Colonic mucosa (tissue), 4 donors: ENCODE measurements at regions of chr20 and their contacts with region 1.

Region 1: DNA sequence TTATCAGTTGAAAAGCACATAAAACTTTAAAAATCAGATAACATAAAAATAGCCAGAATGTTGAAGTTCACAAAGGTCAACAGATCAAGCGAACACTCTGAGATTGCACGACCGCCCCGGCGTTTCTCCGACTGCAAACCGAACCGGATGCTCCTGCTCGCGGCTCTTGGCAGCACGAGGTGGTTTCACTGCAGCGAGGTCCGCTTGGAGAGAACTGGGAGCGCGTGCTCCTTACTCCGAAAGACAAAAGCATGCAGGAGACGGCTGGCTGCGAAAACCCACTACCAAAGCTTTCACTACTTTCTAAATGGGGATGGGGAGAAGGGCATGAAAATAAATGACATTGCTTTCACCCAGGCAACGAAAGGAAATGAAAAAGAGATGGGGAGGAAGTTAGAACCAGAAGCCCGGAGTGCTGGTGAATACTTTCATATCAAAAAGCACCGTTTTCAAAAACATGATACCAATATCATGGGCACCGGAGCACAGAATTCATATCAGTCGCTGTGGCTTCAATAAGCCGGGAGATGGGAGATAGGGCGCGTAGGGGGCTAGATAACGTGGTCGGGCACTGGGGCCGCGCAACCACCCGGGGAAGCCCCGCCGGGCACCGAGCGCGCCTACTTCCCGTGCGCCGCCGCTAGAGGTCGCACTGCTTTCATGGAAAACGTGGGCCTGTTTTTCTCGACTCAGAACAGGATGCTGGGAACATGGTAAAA is 8.3 kb upstream of the ANKRD60 start:
- DNase-seq: peak; percentile 86
- H3K4me3 ChIP-seq: peak overlapping the region; percentile 40
- H3K27ac ChIP-seq: no peak overlapping the region
- H3K4me1 ChIP-seq: no peaks in the 10 kb centered on the region
- H3K27me3 ChIP-seq: no peaks in the 10 kb centered on the region
- CTCF ChIP-seq: peak; percentile 94

Region 2: DNA sequence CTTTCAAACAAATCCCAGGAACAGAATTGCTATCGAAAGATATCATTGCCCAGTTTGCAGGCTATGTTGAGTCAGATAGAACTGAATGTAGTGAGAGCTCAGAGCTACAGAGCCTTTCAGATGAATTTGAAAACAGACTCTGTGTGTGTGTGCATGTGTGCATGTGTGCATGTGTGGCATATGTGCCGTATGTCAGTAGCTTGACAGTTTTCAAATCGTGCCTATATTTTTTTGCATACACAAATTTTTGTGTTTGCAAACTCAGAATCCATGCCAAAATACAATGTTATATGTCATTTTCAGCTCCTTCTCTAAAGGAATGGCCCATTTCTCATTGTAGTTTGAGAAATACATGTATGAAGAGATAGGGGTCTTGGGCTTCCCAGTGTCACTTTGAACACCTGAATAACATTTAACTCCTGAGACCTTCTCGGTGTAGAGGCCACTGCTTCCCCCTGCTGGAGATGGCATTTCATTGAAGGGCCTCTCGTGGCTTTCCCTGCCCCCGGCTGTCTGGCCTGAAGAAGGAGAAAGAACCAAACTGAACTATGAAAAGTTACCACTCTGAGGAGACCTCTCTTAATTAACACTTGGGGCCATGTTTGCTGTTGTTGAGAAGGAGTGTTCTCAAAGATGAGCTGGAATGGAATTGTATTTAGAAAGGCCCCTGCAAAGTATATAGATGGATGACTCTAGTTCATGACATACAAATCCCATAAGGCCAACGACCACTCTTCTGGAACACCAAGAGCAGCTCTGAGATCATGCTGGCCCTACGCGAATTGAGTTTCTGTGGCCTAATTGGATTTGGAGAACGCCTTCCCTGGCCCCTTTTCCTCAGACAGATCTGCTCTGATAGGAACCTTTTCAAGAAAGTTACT is 211.0 kb after region 1 on chr20:
- intact Hi-C with region 1: loop called (anchors 5 kb)
- DNase-seq: peak; percentile 53
- H3K4me3 ChIP-seq: no peak overlapping the region
- H3K27ac ChIP-seq: no peak overlapping the region
- H3K4me1 ChIP-seq: no peaks in the 10 kb centered on the region
- H3K27me3 ChIP-seq: no peaks in the 10 kb centered on the region
- CTCF ChIP-seq: peak; percentile 53

Region 3: DNA sequence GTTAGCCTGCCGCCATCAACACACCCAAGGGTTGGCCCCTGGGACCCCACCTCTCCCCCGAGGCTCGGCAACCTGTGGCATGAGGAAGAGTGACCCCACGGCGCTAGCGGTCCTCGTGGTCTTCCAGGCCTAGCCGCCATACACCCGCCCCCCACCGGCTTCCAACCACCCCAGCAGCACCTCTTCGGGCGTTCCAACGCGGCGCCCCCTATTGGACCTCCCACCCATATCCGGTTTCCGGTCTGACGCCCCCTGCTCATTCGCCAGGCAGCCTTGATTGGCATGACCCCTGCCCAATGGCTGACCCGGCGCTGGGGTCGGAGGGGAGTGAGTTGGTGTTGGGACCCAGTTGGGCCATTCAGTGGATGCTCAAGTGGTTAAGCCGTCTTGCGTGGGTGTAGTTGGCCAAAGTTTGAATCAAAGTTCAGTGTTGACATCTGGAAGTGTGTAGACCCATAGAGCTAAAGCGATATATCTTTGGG is 614.0 kb after region 1 on chr20 and contains the start of gene GNAS-AS1:
- intact Hi-C with region 1: loop called (anchors 10 kb)
- DNase-seq: peak; percentile 84
- H3K4me3 ChIP-seq: peak within 1 kb of the TSS; percentile 38
- H3K27ac ChIP-seq: no peak within 1 kb of the TSS
- H3K4me1 ChIP-seq: no peaks in the 10 kb centered on the region
- H3K27me3 ChIP-seq: peaks cover 35% of the 10 kb centered on the region
- CTCF ChIP-seq: no peak
- total RNA-seq, gene GNAS-AS1: 0.88 to 1.7 TPM